AG04450 (cell line): ENCODE measurements at regions of chr1 and their contacts with region 1.

Region 1: GRCh38 chr1:41003640-41004220 is 17.8 kb downstream of the SLFNL1 start:
- DNase-seq: peak; percentile 97
- H3K4me3 ChIP-seq: no peak overlapping the region
- H3K27ac ChIP-seq: peak overlapping the region; percentile 79
- H3K27me3 ChIP-seq: no peaks in the 10 kb centered on the region
- CTCF ChIP-seq: peak; percentile 68

Region 2: GRCh38 chr1:40979233-40980067 is 24.3 kb before region 1 on chr1 and contains the start of gene CTPS1:
- CTCF ChIA-PET with region 1: interaction called, 7 read pairs
- POLR2A ChIA-PET with region 1: interaction called, 14 read pairs
- DNase-seq: peak; percentile 78
- H3K4me3 ChIP-seq: peak within 1 kb of the TSS; percentile 77
- H3K27ac ChIP-seq: peak within 1 kb of the TSS; percentile 95
- H3K27me3 ChIP-seq: no peaks in the 10 kb centered on the region
- CTCF ChIP-seq: 0 out of 2 replicates have a peak, but pooled peaks have one; percentile 24
- polyA plus RNA-seq, gene CTPS1: 27.3 and 29.5 TPM in 2 replicates

Region 3: DNA sequence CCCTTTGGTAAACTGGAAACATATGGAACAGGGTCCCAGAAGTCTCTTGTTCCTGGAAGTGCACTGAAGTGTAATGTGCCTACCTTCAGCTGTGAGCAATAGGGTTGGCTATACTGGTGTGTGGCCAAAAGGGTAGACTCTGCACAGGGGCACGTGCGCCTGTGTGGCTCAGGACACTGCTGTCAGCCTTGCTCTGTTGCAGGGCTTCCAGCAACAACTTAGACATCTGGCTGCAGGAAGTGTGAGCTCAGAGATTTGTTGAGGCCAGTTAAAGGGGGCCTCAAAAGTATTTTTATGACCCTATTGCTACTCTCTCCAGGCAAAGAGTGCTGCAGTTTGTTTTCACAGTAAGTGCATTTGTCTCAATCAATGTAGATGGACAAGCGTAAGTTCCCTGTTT is 16.8 kb before region 1 on chr1:
- CTCF ChIA-PET with region 1: interaction called, 13 read pairs
- POLR2A ChIA-PET with region 1: interaction called, 5 read pairs
- DNase-seq: no peak
- H3K4me3 ChIP-seq: no peak overlapping the region
- H3K27ac ChIP-seq: no peak overlapping the region
- H3K27me3 ChIP-seq: no peaks in the 10 kb centered on the region
- CTCF ChIP-seq: no peak